ENCODE measurements at regions of chr22 and their contacts with region 1.

Region 1: DNA sequence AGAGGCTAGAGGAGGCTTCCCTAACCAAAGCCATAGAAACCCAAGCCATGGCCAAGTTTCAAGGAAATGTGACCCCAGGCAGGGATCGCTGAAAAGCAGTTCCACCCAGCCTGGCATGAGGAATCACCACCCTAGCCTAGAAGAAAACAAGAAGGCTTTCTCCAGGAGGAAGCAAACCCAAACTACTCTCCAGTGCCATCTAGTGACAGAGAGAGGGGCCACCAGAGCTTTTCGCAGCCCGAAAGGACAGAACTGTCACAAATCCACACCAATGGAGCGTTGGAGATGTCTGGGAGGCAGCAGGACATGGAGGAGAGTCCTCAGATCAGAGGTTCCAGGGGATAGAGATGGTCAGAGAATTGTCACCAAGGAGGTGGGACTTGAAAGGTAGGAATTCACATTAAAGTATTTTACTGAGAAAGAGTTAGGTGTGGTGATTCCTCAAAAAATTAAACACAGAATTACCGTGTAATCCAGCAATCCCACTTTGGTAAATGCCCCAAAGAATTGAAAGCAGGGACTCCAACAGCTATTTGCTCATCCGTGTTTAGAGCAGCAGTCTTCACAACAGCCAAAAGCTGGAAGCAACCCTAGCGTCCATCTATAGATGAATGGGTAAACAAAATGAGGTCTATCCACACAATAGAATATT is 67.3 kb upstream of the NUP50 start:
- DNase-seq: peak; percentile 64 to 86 (median 68)
- H3K4me3 ChIP-seq: no peak overlapping the region
- H3K27ac ChIP-seq: no peak overlapping the region
- H3K4me1 ChIP-seq: no peaks in the 10 kb centered on the region
- H3K27me3 ChIP-seq: no peaks in the 10 kb centered on the region
- CTCF ChIP-seq: peak; percentile 51 to 81 (median 78)
- POLR2A ChIP-seq: no peak

Region 2: DNA sequence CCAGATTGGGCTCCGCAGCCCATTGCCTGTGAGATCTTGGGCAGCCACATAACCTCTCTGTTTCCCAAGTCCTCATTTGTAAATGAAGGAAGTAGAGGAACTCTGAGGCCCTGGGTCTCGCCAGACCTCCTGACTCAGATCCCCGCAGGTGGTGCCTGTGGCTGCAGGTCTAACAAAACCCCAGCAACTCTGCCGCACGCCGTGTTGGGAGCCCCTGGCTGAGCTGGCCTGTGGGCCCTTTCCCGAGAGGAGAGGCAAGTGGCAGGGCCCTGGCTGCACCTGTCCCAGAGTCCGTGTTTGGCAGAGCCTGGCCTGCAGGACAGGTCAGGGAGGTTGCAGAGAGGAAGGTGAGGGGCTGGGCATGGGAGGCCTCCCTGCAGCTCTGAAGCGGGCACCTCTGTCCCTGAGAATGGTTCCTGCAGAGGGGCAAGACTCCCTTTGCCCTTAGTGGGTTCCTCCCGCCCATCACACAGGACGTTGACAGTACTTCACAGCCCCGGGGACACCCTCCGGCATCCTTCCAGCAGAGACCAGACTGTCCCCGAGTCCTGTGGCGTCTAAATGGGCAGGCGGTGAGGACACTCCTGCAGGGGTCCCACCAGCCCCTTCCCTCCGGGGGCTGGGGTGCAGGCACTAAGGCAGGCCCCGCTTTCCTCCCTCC is 276.3 kb before region 1 on chr22:
- intact Hi-C with region 1: loop called (anchors 5 to 10 kb)
- DNase-seq: no peak
- H3K4me3 ChIP-seq: no peak overlapping the region
- H3K27ac ChIP-seq: no peak overlapping the region
- H3K4me1 ChIP-seq: no peaks in the 10 kb centered on the region
- H3K27me3 ChIP-seq: no peaks in the 10 kb centered on the region
- CTCF ChIP-seq: no peak
- POLR2A ChIP-seq: no peak

Region 3: GRCh38 chr22:44828193-44828592 is 268.2 kb before region 1 on chr22:
- intact Hi-C with region 1: loop called (anchors 5 to 10 kb)
- DNase-seq: peak in 1 of 7 donors; percentile 9
- H3K4me3 ChIP-seq: no peak overlapping the region
- H3K27ac ChIP-seq: no peak overlapping the region
- H3K4me1 ChIP-seq: no peaks in the 10 kb centered on the region
- H3K27me3 ChIP-seq: no peaks in the 10 kb centered on the region
- CTCF ChIP-seq: peak in 2 of 6 experiments; percentile 23 to 29
- POLR2A ChIP-seq: no peak

Region 4: DNA sequence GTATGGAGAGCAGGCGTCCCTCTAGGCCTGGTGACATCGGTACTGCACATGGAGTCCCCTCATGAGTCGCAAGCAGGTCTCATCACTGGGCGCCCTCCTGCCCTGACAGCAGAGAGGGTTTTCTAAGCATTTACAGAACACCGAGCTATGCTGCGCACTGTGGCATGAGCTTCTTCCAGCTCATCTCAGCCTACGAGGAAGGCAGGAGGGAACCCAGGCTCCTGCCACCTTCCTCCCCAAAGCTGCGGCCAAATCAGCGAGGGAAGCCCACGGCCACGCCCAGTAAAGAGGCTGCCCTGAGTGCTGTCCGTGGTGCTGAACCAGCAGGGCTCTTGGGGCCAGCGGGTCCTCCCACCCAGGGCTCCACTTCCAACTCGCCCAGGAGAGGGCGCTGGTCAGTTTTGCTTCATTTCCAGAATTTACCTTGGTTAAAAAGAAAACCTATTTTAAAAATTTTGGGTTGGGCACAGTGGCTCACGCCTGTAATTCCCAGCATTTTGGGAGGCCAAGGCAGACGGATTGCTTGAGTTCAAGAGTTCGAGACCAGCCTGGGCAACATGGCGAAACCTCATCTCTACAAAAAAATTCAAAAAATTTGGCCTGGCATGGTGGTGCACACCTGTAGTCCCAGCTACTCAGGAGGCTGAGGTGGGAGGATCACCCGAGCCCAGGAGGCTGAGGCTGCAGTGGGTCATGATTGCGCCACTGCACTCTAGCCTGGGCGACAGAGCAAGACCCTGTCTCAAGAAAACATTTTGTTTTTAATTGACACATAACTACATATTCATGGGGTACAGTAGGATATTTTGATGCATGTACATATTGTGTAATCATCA is 120.7 kb before region 1 on chr22:
- intact Hi-C with region 1: loop called (anchors 5 to 10 kb)
- DNase-seq: peak; percentile 89 to 93 (median 91)
- H3K4me3 ChIP-seq: no peak overlapping the region
- H3K27ac ChIP-seq: no peak overlapping the region
- H3K4me1 ChIP-seq: no peaks in the 10 kb centered on the region
- H3K27me3 ChIP-seq: no peaks in the 10 kb centered on the region
- CTCF ChIP-seq: peak; percentile 71 to 78 (median 76)
- POLR2A ChIP-seq: no peak